Cardiac septum (tissue), 1 donor: ENCODE measurements at regions of chrX and their contacts with region 1.

Region 1: GRCh38 chrX:136711147-136711546 is 63.2 kb downstream of the CD40LG start:
- DNase-seq: no peak

Region 2: DNA sequence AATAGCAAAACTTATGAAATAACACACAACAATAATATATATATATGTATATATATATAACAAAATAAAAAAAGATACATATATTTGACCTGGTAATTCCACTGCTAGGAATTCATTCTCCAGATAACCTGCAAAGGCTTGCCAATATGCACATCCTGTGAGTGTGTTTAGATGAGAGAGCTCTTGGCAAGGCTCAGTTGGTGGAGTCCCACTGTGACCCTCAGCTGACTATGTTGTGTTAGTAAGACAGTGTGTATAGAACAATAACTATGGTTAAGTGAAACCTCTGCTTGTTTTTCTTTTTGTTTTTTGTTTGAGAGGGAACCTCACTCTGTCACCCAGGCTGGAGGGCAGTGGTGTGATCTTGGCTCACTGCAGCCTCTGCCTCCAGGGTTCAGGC is 208.9 kb after region 1 on chrX:
- intact Hi-C with region 1: loop called (anchors 5 kb)
- DNase-seq: no peak